ENCODE measurements at regions of chr15 and their contacts with region 1.

Region 1: GRCh38 chr15:34367101-34368081 is at the start of gene LPCAT4:
- DNase-seq: peak; percentile 82 to 96 (median 88)
- ATAC-seq: peak; percentile 84
- H3K4me3 ChIP-seq: peak within 1 kb of the TSS; percentile 94
- H3K4me3 Mint-ChIP-seq: peak within 1 kb of the TSS; percentile 97
- H3K27ac ChIP-seq: peak within 1 kb of the TSS; percentile 80 to 88
- H3K27ac Mint-ChIP-seq: peak within 1 kb of the TSS; percentile 92
- H3K4me1 ChIP-seq: peaks cover 40% of the 10 kb centered on the region
- H3K4me1 Mint-ChIP-seq: peaks cover 43% of the 10 kb centered on the region
- H3K27me3 ChIP-seq: no peaks in the 10 kb centered on the region
- H3K27me3 Mint-ChIP-seq: no peaks in the 10 kb centered on the region
- CTCF ChIP-seq: peak; percentile 90
- total RNA-seq, gene LPCAT4: 41.0 to 45.2 TPM

Region 2: GRCh38 chr15:34038023-34038870 is 329.1 kb before region 1 on chr15:
- CTCF ChIA-PET with region 1: no interaction called
- POLR2A ChIA-PET with region 1: interaction called, 12 read pairs
- intact Hi-C with region 1: no loop called
- DNase-seq: peak; percentile 51 to 91 (median 68)
- ATAC-seq: peak; percentile 81
- H3K4me3 ChIP-seq: peak overlapping the region; percentile 76
- H3K4me3 Mint-ChIP-seq: peak overlapping the region; percentile 91
- H3K27ac ChIP-seq: peak overlapping the region; percentile 55 to 57
- H3K27ac Mint-ChIP-seq: peak overlapping the region; percentile 90
- H3K4me1 ChIP-seq: peaks cover 7% of the 10 kb centered on the region
- H3K4me1 Mint-ChIP-seq: peaks cover 20% of the 10 kb centered on the region
- H3K27me3 ChIP-seq: no peaks in the 10 kb centered on the region
- H3K27me3 Mint-ChIP-seq: no peaks in the 10 kb centered on the region
- CTCF ChIP-seq: no peak

Region 3: DNA sequence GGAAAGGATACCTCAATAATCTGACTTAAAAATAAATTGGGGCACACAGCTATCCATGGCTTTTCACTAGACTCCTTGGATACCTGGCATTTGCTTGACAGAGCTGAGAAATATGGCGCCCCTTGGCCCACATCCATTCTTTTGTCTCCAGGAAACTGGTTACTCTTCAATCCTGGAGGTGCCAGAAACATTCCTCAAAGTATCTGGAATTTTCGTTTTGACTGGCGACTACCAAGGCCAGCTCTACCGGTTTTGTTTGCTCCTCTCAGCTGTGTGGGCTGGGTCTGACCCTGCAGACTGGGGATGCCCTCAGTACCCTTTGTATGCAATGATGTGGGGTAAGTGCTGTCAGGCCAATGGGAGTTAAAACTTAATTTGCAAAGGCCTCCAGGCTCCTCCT is 184.4 kb before region 1 on chr15:
- CTCF ChIA-PET with region 1: no interaction called
- POLR2A ChIA-PET with region 1: no interaction called
- intact Hi-C with region 1: no loop called
- DNase-seq: no peak
- ATAC-seq: no peak
- H3K4me3 ChIP-seq: no peak overlapping the region
- H3K4me3 Mint-ChIP-seq: no peak overlapping the region
- H3K27ac ChIP-seq: no peak overlapping the region
- H3K27ac Mint-ChIP-seq: no peak overlapping the region
- H3K4me1 ChIP-seq: peaks cover 4% of the 10 kb centered on the region
- H3K4me1 Mint-ChIP-seq: peaks cover 14% of the 10 kb centered on the region
- H3K27me3 ChIP-seq: no peaks in the 10 kb centered on the region
- H3K27me3 Mint-ChIP-seq: no peaks in the 10 kb centered on the region
- CTCF ChIP-seq: no peak

Region 4: GRCh38 chr15:34223904-34224596 is 143.3 kb before region 1 on chr15:
- CTCF ChIA-PET with region 1: interaction called, 5 read pairs
- POLR2A ChIA-PET with region 1: interaction called, 14 read pairs
- intact Hi-C with region 1: loop called in 1 of 2 experiments (anchors 5 kb)
- DNase-seq: peak in 2 of 14 experiments; percentile 6 to 21
- ATAC-seq: no peak
- H3K4me3 ChIP-seq: peak overlapping the region; percentile 68
- H3K4me3 Mint-ChIP-seq: peak overlapping the region; percentile 97
- H3K27ac ChIP-seq: peak overlapping the region in 1 of 2 donors; percentile 81
- H3K27ac Mint-ChIP-seq: peak overlapping the region; percentile 99
- H3K4me1 ChIP-seq: peaks cover 20% of the 10 kb centered on the region
- H3K4me1 Mint-ChIP-seq: peaks cover 23% of the 10 kb centered on the region
- H3K27me3 ChIP-seq: no peaks in the 10 kb centered on the region
- H3K27me3 Mint-ChIP-seq: peaks cover 5% of the 10 kb centered on the region
- CTCF ChIP-seq: no peak

Region 5: DNA sequence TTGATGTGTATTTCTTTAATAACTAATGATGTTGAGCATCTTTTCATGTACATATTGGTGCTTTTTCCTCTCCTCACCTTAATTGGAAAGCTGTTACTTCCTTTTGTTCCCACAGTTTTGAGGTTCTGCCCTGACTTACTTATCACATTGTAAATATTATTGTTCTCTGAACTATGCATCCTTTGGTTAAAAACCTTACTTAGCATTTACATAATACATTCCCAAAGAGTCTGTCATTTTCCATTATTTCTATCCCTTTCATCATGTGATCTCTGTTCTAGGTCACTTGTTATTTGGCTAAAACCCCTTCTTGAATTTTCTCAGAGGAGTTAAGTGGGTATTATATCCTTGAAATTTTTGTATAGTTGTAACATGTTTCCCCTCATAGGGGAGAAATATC is 62.8 kb before region 1 on chr15:
- CTCF ChIA-PET with region 1: interaction called, 6 read pairs
- POLR2A ChIA-PET with region 1: no interaction called
- intact Hi-C with region 1: loop called in 1 of 2 experiments (anchors 5 kb)
- DNase-seq: no peak
- ATAC-seq: no peak
- H3K4me3 ChIP-seq: no peak overlapping the region
- H3K4me3 Mint-ChIP-seq: no peak overlapping the region
- H3K27ac ChIP-seq: no peak overlapping the region
- H3K27ac Mint-ChIP-seq: no peak overlapping the region
- H3K4me1 ChIP-seq: peaks cover 8% of the 10 kb centered on the region
- H3K4me1 Mint-ChIP-seq: peaks cover 78% of the 10 kb centered on the region
- H3K27me3 ChIP-seq: no peaks in the 10 kb centered on the region
- H3K27me3 Mint-ChIP-seq: no peaks in the 10 kb centered on the region
- CTCF ChIP-seq: no peak

Region 6: DNA sequence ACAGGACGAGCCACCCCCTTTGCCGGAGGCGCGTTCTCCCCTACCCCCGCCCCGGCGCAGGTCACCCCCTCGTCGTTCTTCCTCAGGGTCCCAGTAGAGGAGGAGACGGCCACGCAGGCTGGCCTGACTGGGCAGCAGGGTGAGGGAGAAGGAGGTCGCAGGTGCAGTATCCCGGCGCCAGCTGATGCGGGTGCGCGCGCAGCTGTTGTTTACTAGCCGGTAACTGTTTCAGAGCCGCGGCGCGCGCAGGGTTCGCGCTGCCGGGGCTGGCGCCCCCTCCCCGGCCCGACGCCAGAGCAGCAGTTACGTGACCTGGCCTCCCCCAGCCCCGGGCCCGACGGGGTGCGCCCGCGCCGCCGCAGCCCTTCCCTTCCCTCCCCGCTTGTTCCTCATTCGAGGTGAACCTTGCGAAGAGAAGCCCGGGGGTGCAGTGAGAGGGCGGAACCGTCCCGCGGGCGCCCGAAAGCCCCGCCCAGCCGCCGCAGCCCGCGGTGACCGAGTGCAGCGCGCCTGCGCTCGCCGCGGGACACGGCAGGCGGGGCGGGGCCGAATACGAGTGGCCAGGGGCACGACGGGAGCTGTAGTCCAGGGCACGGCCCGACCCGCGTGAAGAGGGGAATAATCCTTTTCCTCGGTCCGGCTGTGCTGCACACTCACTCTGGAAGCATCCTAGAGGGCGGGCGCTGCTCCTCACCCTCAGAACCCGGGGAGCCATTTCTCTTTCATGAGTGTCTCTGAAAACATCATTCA is 29.7 kb before region 1 on chr15 and contains the start of gene SLC12A6:
- CTCF ChIA-PET with region 1: interaction called, 49 read pairs
- POLR2A ChIA-PET with region 1: interaction called, 72 read pairs
- intact Hi-C with region 1: loop called in 1 of 2 experiments (anchors 5 kb)
- DNase-seq: peak; percentile 80 to 97 (median 89)
- ATAC-seq: peak; percentile 79
- H3K4me3 ChIP-seq: peak within 1 kb of the TSS; percentile 98
- H3K4me3 Mint-ChIP-seq: peak within 1 kb of the TSS; percentile 100
- H3K27ac ChIP-seq: peak within 1 kb of the TSS; percentile 80 to 96
- H3K27ac Mint-ChIP-seq: peak within 1 kb of the TSS; percentile 98
- H3K4me1 ChIP-seq: peaks cover 49% of the 10 kb centered on the region
- H3K4me1 Mint-ChIP-seq: peaks cover 61% of the 10 kb centered on the region
- H3K27me3 ChIP-seq: no peaks in the 10 kb centered on the region
- H3K27me3 Mint-ChIP-seq: no peaks in the 10 kb centered on the region
- CTCF ChIP-seq: no peak
- total RNA-seq, gene SLC12A6: 58.5 to 58.7 TPM

Region 7: DNA sequence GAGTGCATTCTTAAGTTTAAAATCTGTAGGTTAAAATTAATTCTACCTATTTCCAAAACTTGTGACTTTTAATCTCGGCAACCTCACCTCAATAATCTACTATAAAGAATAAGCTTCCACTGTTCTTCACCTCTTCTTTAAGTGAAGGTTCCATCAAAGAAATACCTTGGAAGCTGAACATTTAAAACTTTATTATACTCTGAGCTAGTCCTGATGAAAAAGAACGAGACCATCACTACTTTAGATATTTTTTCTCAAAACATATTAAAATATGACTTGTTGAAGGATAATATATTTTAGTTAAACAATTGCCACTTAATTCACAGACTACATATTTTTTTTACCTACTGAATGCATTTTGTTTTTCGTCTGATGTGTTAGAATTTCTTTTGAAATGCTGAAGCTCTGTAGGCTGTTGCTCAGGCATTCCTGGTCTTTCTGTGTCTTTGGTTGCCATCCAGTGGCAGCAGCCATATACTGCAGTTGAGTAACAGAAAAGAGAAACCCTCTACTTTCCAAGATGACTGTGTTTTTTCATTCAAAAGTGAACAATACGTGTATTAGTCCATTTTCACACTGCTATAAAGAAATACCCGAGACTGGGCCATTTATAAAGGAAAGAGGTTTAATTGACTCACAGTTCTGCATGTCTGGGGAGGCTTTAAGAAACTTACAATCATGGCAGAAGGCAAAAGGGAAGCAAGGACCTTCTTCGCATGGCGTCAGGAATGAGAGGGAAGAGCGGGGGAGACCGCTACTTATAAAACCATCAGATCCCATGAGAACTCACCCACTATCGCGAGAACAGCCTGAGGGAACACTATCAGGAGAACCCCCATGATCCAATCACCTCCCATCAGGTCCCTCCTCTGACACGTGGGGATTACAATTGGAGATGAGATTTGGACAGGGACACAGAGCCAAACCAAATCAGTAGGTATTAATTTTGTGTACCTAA is 220.6 kb after region 1 on chr15:
- CTCF ChIA-PET with region 1: interaction called, 16 read pairs
- POLR2A ChIA-PET with region 1: interaction called, 12 read pairs
- intact Hi-C with region 1: no loop called
- DNase-seq: peak; percentile 37 to 82 (median 55)
- ATAC-seq: peak; percentile 59
- H3K4me3 ChIP-seq: peak overlapping the region; percentile 16
- H3K4me3 Mint-ChIP-seq: peak overlapping the region; percentile 77
- H3K27ac ChIP-seq: no peak overlapping the region
- H3K27ac Mint-ChIP-seq: no peak overlapping the region
- H3K4me1 ChIP-seq: peaks cover 11% of the 10 kb centered on the region
- H3K4me1 Mint-ChIP-seq: peaks cover 9% of the 10 kb centered on the region
- H3K27me3 ChIP-seq: no peaks in the 10 kb centered on the region
- H3K27me3 Mint-ChIP-seq: peaks cover 19% of the 10 kb centered on the region
- CTCF ChIP-seq: peak; percentile 93